ENCODE measurements at regions of chr1 and their contacts with region 1.

Region 1: GRCh38 chr1:214123061-214123784 is 135.4 kb downstream of the PROX1 start:
- DNase-seq: peak; percentile 46
- H3K4me3 ChIP-seq: no peak overlapping the region
- H3K27ac ChIP-seq: no peak overlapping the region
- H3K4me1 ChIP-seq: no peaks in the 10 kb centered on the region
- H3K27me3 ChIP-seq: no peaks in the 10 kb centered on the region
- CTCF ChIP-seq: peak; percentile 57 to 71

Region 2: GRCh38 chr1:213244664-213245091 is 878.5 kb before region 1 on chr1:
- CTCF ChIA-PET with region 1: no interaction called
- dilution Hi-C with region 1: no loop called
- in situ Hi-C with region 1: no loop called
- intact Hi-C with region 1: loop called (anchors 1 kb)
- DNase-seq: peak; percentile 14
- H3K4me3 ChIP-seq: no peak overlapping the region
- H3K27ac ChIP-seq: no peak overlapping the region
- H3K4me1 ChIP-seq: no peaks in the 10 kb centered on the region
- H3K27me3 ChIP-seq: no peaks in the 10 kb centered on the region
- CTCF ChIP-seq: peak; percentile 65 to 67

Region 3: GRCh38 chr1:213564215-213564659 is 559.0 kb before region 1 on chr1:
- CTCF ChIA-PET with region 1: no interaction called
- dilution Hi-C with region 1: no loop called
- in situ Hi-C with region 1: loop called in 1 of 2 experiments (anchors 25 kb)
- intact Hi-C with region 1: loop called (anchors 1 kb)
- DNase-seq: peak; percentile 34
- H3K4me3 ChIP-seq: no peak overlapping the region
- H3K27ac ChIP-seq: no peak overlapping the region
- H3K4me1 ChIP-seq: no peaks in the 10 kb centered on the region
- H3K27me3 ChIP-seq: no peaks in the 10 kb centered on the region
- CTCF ChIP-seq: peak; percentile 78 to 82

Region 4: GRCh38 chr1:213820362-213821149 is 302.7 kb before region 1 on chr1:
- CTCF ChIA-PET with region 1: no interaction called
- dilution Hi-C with region 1: no loop called
- in situ Hi-C with region 1: no loop called
- intact Hi-C with region 1: loop called (anchors 2 kb)
- DNase-seq: no peak
- H3K4me3 ChIP-seq: no peak overlapping the region
- H3K27ac ChIP-seq: no peak overlapping the region
- H3K4me1 ChIP-seq: no peaks in the 10 kb centered on the region
- H3K27me3 ChIP-seq: no peaks in the 10 kb centered on the region
- CTCF ChIP-seq: no peak

Measured in mammary epithelial cell (primary cell).